Activated CD4-positive, alpha-beta memory T cell treated with anti-CD3 and anti-CD28 coated beads, Interleukin-2, amount 10 ng/mL, durations not matched to agents 7 days and 5 days (primary cell): ENCODE measurements at regions of chr18 and their contacts with region 1.

Region 1: GRCh38 chr18:80157708-80158343 is 48.8 kb downstream of the ADNP2 start:
- DNase-seq: peak; percentile 76
- H3K4me3 Mint-ChIP-seq: no peak overlapping the region
- H3K27ac Mint-ChIP-seq: no peak overlapping the region
- H3K4me1 Mint-ChIP-seq: peaks cover 8% of the 10 kb centered on the region
- H3K27me3 Mint-ChIP-seq: peaks cover 13% of the 10 kb centered on the region

Region 2: DNA sequence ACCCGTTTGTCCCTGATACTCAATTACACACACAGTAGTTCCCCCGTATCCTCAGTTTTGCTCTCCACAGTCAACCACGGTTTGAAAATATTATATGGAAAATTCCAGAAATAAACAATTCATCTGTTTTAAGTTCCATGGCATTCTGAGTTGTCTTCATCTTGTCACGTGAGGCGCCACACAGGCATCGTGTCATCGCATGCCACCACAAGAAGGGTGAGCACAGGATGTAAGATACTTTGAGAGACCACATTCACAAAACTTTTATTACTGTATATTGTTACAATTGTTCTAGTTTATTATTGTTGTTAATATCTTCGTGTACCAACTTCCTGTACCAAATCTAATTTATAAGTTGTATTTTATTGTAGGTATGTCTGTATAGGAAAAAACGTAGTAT is 31.0 kb before region 1 on chr18:
- CTCF ChIA-PET with region 1: no interaction called
- POLR2A ChIA-PET with region 1: no interaction called
- DNase-seq: no peak
- H3K4me3 Mint-ChIP-seq: no peak overlapping the region
- H3K27ac Mint-ChIP-seq: no peak overlapping the region
- H3K4me1 Mint-ChIP-seq: peaks cover 16% of the 10 kb centered on the region
- H3K27me3 Mint-ChIP-seq: no peaks in the 10 kb centered on the region

Region 3: DNA sequence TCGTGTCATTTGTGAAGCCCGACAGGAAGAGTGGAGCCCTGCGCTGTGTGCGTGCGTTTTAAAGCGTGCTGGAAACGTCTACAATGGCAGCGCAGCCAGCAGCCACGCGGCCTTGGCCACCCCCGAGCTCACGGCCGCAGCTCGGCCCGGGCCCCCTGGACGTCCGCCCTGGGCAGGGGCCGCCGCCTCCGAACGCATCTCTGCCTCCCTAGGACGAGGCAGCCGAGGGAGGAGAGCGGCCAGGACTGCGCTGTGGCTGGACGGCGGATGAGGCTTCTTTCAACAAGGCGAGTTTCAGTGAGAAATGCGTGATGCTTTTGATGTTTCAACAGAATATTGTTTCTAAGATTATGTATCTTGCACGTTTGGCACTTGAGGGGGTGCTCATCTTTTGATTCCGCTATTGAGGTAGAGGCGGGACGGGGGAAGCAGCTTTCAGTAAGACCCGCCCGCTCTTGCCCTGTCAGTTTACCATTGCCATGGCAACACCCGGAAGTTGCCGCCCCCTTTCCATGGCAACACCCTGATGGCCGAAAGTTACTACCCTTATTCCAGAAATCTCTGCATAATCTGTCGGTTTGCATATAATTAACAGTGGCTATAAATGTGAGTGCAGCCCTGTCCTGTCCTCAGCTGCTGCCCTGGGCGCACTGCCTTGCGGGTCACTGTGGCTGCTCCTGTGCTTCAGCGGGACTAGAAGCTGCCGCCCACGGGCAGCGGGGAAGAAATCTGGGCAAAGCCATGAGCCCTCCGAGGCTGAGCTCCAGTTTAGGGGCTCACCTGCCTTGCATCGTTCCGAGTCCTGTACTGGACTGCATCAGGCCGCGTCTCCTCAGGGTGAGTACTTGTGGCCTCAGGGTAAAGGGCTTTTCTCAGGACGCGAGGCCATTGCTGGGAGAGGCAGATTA is 10.2 kb before region 1 on chr18:
- CTCF ChIA-PET with region 1: interaction called, 65 read pairs
- POLR2A ChIA-PET with region 1: no interaction called
- DNase-seq: peak; percentile 85
- H3K4me3 Mint-ChIP-seq: peak overlapping the region; percentile 79
- H3K27ac Mint-ChIP-seq: no peak overlapping the region
- H3K4me1 Mint-ChIP-seq: peaks cover 19% of the 10 kb centered on the region
- H3K27me3 Mint-ChIP-seq: peaks cover 14% of the 10 kb centered on the region

Region 4: DNA sequence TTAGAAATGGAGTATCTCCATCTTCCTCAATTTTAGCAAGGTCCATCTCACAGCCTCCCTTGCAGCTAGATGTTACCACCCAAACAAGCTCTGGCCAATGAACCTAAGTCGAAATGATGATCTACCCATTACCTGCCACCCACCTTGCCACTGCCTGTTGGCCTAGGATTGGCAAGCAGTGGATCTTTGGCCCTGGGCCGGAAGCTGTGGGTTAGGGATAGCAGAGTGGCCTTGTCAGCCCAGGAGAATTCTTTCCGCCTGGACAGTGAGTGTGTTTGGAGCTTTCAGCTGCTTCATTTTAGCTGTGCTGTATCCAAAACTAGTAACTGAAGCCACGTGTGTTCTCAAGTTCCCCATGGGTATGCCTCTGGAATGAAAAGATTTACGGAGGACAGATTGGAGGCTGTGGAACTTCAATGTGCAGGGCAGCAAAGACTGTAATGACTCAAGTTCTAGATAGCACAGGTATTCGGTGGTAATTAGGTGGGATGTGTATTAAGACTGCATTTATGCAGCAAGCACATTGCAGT is 97.2 kb after region 1 on chr18:
- CTCF ChIA-PET with region 1: interaction called, 11 read pairs
- POLR2A ChIA-PET with region 1: no interaction called
- DNase-seq: no peak
- H3K4me3 Mint-ChIP-seq: no peak overlapping the region
- H3K27ac Mint-ChIP-seq: no peak overlapping the region
- H3K4me1 Mint-ChIP-seq: no peaks in the 10 kb centered on the region
- H3K27me3 Mint-ChIP-seq: peaks cover under 1% of the 10 kb centered on the region